H1 (cell line): ENCODE measurements at regions of chr18 and their contacts with region 1.

Region 1: DNA sequence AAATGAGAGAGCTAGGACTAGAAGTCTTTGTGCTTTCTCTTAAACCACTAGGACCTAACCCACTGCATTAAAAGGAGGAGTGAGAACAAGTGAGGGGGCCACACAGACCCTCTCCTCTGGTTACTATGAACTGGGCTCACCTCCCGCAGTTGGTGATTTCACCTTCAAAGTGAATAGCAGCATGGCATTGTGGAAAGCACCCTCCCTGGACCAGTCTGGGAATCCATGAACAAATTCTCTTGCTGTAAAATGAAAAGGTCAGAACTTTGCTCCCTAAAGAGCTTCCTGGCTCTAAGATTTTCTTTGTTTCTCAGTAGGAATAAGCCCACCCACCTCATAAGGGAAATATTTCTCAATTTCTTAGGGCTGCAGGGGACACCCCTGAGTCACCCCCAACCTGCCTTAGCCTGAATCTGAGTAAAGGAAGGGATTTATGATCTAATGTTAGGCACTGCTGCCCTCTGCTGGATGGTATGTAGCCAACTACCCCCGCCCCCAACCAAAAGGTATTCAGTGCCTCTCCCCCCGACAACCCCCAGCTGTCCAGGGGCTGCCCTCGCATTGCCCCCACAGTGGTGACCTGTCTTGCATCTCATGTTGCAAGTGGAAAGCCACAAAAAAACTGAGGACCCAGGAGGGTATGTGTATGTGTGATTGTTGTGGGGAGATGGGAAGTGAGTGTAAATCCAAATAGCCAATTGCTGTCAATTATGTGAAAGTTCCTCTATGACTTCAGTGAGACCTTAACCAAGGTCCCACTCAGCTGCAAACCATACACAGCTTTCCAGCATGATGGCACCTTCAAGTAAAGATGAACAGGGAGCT is 230.9 kb upstream of the SLC14A2 start:
- DNase-seq: peak; percentile 19 to 86
- H3K4me3 ChIP-seq: no peak overlapping the region
- H3K27ac ChIP-seq: no peak overlapping the region
- H3K4me1 ChIP-seq: peaks cover 0 to 4% (median 1%) of the 10 kb centered on the region in 4 experiments; a peak in 3 of 7 replicates
- H3K27me3 ChIP-seq: no peaks in the 10 kb centered on the region
- CTCF ChIP-seq: peak; percentile 65 to 77 (median 75)
- EP300 ChIP-seq: no peak
- POLR2A ChIP-seq: no peak
- RAD21 ChIP-seq: peak; percentile 76 to 84

Region 2: GRCh38 chr18:45081566-45082181 is 302.7 kb before region 1 on chr18:
- CTCF ChIA-PET with region 1: no interaction called
- POLR2A ChIA-PET with region 1: no interaction called
- DNase-seq: no peak
- H3K4me3 ChIP-seq: no peak overlapping the region
- H3K27ac ChIP-seq: no peak overlapping the region
- H3K4me1 ChIP-seq: peaks cover 0 to 3% (median 2%) of the 10 kb centered on the region in 4 experiments; a peak in 3 of 7 replicates
- H3K27me3 ChIP-seq: no peaks in the 10 kb centered on the region
- CTCF ChIP-seq: no peak
- EP300 ChIP-seq: no peak
- POLR2A ChIP-seq: no peak
- RAD21 ChIP-seq: no peak

Region 3: DNA sequence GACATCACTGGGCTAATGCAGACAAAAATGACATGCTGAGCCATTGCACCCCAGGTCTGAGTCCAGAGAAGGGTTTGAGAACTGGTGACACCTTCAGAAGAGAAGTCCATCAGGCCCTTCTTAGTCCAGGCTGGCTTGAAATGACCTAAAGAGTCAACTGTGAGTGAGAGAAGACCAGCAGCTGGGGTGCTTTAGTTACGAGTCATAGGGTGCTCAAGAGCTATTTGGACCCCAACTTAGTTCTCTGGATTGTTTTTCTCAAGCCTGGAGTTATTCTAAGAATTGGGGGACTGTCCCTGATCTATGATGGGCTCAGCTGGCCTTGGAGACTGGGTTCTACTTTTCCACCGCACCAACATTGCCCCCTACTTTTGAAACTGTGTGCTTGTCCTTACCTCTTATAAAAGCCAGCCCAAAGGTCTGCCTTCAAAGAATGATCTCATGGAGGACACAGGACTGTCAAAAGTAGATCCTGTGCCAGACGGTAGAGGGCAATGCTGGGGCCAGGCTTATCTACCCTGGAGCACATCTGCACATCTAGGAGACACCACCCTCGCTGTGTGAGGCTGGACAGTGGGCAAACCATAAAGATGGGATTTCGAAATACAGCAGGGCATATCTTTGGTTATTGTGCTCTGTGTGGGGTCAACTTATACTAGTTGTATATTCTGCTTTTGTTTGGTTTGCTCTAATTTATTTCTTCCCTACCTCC is 102.1 kb before region 1 on chr18:
- CTCF ChIA-PET with region 1: interaction called, 131 read pairs
- POLR2A ChIA-PET with region 1: no interaction called
- DNase-seq: no peak
- H3K4me3 ChIP-seq: no peak overlapping the region
- H3K27ac ChIP-seq: no peak overlapping the region
- H3K4me1 ChIP-seq: no peaks in the 10 kb centered on the region
- H3K27me3 ChIP-seq: no peaks in the 10 kb centered on the region
- CTCF ChIP-seq: peak in 1 of 3 experiments; percentile 4; a peak in 1 of 4 replicates
- EP300 ChIP-seq: no peak
- POLR2A ChIP-seq: no peak
- RAD21 ChIP-seq: no peak

Region 4: DNA sequence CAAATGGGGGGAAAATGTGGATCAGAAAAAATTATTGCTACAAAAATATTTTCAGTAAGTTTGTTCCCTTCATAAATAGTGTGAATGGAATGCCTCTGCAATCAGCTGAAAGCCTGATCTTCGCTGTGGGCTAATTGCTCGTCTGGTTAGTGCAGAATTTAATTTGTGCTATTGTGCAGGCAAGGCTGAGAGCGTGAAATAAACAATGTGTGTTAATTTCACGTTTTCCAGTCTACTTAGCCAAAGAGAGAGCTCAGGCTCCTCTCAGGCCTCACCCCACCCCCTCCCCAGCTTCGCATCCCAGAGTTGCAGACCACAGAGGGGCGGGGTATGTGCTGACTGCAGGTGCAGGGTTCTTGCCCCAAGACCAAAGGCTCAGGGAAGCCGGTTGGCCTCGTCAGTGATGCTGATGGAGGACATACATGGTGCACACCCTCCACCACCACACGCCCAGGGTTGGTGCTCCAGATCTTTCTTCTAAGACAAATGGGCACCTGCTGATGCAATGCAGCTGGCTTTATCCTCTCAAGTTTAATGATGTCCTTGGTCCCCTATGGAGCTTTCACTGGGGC is 71.7 kb before region 1 on chr18:
- CTCF ChIA-PET with region 1: interaction called, 42 read pairs
- POLR2A ChIA-PET with region 1: no interaction called
- DNase-seq: no peak
- H3K4me3 ChIP-seq: no peak overlapping the region
- H3K27ac ChIP-seq: no peak overlapping the region
- H3K4me1 ChIP-seq: peaks cover 0 to 2% (median 0%) of the 10 kb centered on the region in 4 experiments; a peak in 1 of 7 replicates
- H3K27me3 ChIP-seq: no peaks in the 10 kb centered on the region
- CTCF ChIP-seq: no peak
- EP300 ChIP-seq: no peak
- POLR2A ChIP-seq: no peak
- RAD21 ChIP-seq: no peak

Region 5: GRCh38 chr18:45341454-45341853 is 42.9 kb before region 1 on chr18:
- CTCF ChIA-PET with region 1: interaction called, 16 read pairs
- POLR2A ChIA-PET with region 1: no interaction called
- DNase-seq: no peak
- H3K4me3 ChIP-seq: no peak overlapping the region
- H3K27ac ChIP-seq: no peak overlapping the region
- H3K4me1 ChIP-seq: no peaks in the 10 kb centered on the region
- H3K27me3 ChIP-seq: no peaks in the 10 kb centered on the region
- CTCF ChIP-seq: peak in 2 of 3 experiments; percentile 5; a peak in 2 of 4 replicates
- EP300 ChIP-seq: no peak
- POLR2A ChIP-seq: no peak
- RAD21 ChIP-seq: no peak

Region 6: GRCh38 chr18:45370255-45371010 is 13.9 kb before region 1 on chr18:
- CTCF ChIA-PET with region 1: interaction called, 32 read pairs
- POLR2A ChIA-PET with region 1: no interaction called
- DNase-seq: no peak
- H3K4me3 ChIP-seq: no peak overlapping the region
- H3K27ac ChIP-seq: no peak overlapping the region
- H3K4me1 ChIP-seq: no peaks in the 10 kb centered on the region
- H3K27me3 ChIP-seq: no peaks in the 10 kb centered on the region
- CTCF ChIP-seq: no peak
- EP300 ChIP-seq: no peak
- POLR2A ChIP-seq: no peak
- RAD21 ChIP-seq: no peak

Region 7: DNA sequence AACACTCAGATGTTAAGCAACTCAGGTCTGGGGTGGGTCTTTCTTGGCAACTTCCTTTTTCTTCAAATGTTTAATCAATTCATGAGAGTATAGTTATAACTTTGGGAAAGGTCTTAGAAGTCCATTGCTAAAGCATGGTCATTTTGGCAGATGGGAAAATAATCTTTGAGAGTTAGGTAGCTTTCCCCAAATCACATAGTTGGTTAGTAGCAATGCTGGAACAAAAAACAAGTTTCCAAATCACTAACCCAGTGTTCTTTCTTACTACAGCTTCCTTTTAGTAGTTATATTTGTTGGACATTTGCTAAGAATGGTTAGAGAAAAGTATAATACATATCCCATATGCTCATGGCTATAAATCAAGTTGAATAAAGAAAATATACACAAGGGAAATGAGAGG is 45.7 kb after region 1 on chr18:
- CTCF ChIA-PET with region 1: no interaction called
- POLR2A ChIA-PET with region 1: no interaction called
- DNase-seq: no peak
- H3K4me3 ChIP-seq: no peak overlapping the region
- H3K27ac ChIP-seq: no peak overlapping the region
- H3K4me1 ChIP-seq: no peaks in the 10 kb centered on the region
- H3K27me3 ChIP-seq: no peaks in the 10 kb centered on the region
- CTCF ChIP-seq: no peak
- EP300 ChIP-seq: no peak
- POLR2A ChIP-seq: no peak
- RAD21 ChIP-seq: no peak